ENCODE measurements at regions of chr7 and their contacts with region 1.

Region 1: GRCh38 chr7:91082852-91083495 is 181.3 kb upstream of the FZD1 start:
- DNase-seq: peak in 4 of 14 experiments; percentile 8 to 47 (median 22)
- ATAC-seq: no peak
- H3K4me3 ChIP-seq: no peak overlapping the region
- H3K4me3 Mint-ChIP-seq: peak overlapping the region; percentile 30
- H3K27ac ChIP-seq: no peak overlapping the region
- H3K27ac Mint-ChIP-seq: peak overlapping the region; percentile 74
- H3K4me1 ChIP-seq: peaks cover 21% of the 10 kb centered on the region
- H3K4me1 Mint-ChIP-seq: peaks cover 36% of the 10 kb centered on the region
- H3K27me3 ChIP-seq: no peaks in the 10 kb centered on the region
- H3K27me3 Mint-ChIP-seq: no peaks in the 10 kb centered on the region
- CTCF ChIP-seq: peak; percentile 66

Region 2: DNA sequence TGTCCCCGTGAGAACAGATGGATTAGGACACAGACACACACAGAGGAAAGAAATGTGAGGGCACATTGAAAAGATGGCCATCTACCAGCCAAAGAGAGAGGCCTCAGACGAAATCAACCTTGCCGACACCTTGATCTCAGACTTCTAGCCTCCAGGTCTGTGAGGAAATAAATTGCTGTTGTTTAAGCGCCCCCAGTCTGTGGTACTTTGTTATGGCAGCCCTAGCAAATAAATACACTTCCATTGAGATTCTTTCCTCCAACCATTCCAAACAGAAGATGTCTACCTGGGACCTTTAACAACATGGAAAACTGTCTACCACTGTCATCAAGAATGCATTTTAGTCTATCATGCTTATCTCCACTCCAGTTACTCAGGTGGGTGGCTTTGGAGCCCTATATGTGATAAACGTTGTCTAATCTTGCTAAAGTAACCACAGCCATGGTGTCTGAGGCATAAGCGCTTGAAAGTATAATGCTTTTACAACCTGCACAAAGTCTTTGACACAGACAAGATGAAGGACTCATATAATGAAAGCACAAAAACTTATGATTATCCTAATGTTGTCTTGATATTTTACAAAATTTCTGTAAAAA is 553.3 kb after region 1 on chr7:
- CTCF ChIA-PET with region 1: no interaction called
- POLR2A ChIA-PET with region 1: no interaction called
- intact Hi-C with region 1: loop called (anchors 2 kb)
- DNase-seq: peak in 3 of 14 experiments; percentile 5 to 14 (median 7)
- ATAC-seq: no peak
- H3K4me3 ChIP-seq: no peak overlapping the region
- H3K4me3 Mint-ChIP-seq: no peak overlapping the region
- H3K27ac ChIP-seq: no peak overlapping the region
- H3K27ac Mint-ChIP-seq: no peak overlapping the region
- H3K4me1 ChIP-seq: no peaks in the 10 kb centered on the region
- H3K4me1 Mint-ChIP-seq: no peaks in the 10 kb centered on the region
- H3K27me3 ChIP-seq: no peaks in the 10 kb centered on the region
- H3K27me3 Mint-ChIP-seq: no peaks in the 10 kb centered on the region
- CTCF ChIP-seq: no peak

Region 3: DNA sequence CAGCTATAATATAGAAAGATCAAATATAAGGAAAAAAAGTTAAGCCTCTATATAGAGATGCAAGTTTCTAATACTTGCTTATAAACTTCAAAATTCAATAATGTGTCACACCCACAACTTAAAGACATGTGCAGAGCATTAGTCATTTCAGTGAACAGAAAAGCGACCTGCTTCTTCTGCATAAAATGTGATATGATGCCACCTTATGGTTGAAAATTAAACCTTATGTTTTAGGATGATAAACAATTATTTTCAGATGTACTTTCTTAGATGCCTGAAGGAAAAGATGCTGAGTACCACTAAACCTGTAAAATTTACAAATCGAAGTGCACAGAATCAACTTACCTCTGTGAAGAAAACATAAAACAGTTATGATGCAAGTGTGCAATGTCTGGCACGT is 701.5 kb after region 1 on chr7:
- CTCF ChIA-PET with region 1: no interaction called
- POLR2A ChIA-PET with region 1: no interaction called
- intact Hi-C with region 1: loop called (anchors 2 to 5 kb)
- DNase-seq: no peak
- ATAC-seq: no peak
- H3K4me3 ChIP-seq: no peak overlapping the region
- H3K4me3 Mint-ChIP-seq: no peak overlapping the region
- H3K27ac ChIP-seq: no peak overlapping the region
- H3K27ac Mint-ChIP-seq: no peak overlapping the region
- H3K4me1 ChIP-seq: no peaks in the 10 kb centered on the region
- H3K4me1 Mint-ChIP-seq: no peaks in the 10 kb centered on the region
- H3K27me3 ChIP-seq: no peaks in the 10 kb centered on the region
- H3K27me3 Mint-ChIP-seq: no peaks in the 10 kb centered on the region
- CTCF ChIP-seq: no peak